ENCODE measurements at regions of chr19 and their contacts with region 1.

Region 1: DNA sequence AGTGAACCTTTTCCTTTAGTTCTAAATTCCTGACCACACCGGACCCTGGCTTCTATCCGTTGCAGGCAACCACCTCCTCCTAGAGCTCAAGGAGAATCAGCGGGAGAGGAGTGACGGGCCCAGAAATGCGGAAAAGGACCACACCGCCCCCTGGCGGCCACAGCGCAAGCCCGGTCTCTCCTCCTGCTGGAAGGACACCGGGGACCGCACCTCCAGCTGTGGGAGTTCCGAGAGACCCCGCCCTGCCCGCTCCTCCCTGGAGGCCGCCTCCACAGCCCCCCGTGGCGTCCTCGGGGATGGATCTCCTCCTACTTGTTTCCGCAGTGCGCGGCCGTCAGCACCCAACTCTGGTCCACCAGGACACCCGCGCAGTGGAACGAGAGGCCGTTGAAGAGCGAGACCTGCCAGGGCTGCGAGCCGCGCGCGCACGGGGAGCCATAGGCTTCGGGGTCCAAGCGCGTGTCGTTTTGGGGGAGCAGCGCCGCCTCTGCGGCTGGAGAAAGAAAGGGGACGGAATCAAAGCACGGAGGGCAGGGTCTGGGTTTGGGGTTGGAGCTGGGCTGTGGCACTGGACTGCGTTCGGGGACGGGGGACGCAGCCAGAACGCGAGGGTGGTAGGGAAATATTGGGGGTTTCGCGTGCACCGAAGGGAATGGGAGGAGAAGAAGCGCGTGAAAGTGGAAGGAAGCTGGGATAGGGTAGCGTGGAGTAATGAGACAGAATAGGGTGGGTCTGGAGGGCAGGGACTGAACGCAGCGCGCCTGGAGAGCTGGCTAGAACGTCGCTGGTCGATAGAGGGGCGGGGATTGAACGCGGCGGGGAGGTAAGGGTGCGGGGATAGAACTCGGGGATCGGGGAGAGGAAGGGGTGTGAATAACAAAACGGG is 2.5 kb downstream of the KLK10 start:
- H3K4me3 Mint-ChIP-seq: peak overlapping the region; percentile 70
- H3K27ac Mint-ChIP-seq: no peak overlapping the region
- H3K4me1 Mint-ChIP-seq: peaks cover 32% of the 10 kb centered on the region
- H3K27me3 Mint-ChIP-seq: peaks cover 70% of the 10 kb centered on the region

Region 2: GRCh38 chr19:50925734-50926133 is 91.3 kb before region 1 on chr19:
- intact Hi-C with region 1: loop called (anchors 5 kb)
- H3K4me3 Mint-ChIP-seq: no peak overlapping the region
- H3K27ac Mint-ChIP-seq: no peak overlapping the region
- H3K4me1 Mint-ChIP-seq: peaks cover 10% of the 10 kb centered on the region
- H3K27me3 Mint-ChIP-seq: peaks cover 33% of the 10 kb centered on the region

Region 3: DNA sequence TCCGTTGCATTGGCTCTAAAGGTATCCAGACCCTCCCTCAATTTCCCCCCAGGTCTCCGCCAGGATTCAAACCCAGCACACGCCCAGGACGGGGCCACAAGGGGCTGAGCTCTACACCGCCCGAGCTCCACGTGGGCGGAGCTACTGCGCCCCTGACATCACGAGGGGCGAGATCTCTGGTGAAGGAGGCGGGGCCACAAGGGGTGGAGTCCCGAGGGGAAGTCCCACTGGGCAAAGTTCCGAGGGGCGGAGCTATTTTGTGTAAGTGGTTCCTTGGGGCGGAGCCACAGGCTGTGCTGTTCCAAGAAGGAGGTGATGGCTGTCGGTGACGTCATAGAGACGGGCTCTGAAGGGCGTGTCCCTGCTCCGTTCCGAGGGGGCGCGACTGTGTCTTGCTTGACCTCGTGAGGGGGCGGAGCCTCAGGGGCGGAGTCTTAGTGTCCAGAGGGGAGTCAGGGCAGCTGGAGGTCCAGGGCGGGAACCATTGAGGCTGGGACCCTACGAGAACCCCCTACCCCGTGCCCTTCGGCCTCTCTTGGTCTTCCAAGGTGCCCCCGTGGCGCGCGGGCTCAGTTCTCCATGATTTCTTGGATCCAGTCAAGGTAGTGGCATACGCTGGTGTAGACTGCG is 14.4 kb before region 1 on chr19:
- intact Hi-C with region 1: no loop called
- H3K4me3 Mint-ChIP-seq: no peak overlapping the region
- H3K27ac Mint-ChIP-seq: no peak overlapping the region
- H3K4me1 Mint-ChIP-seq: no peaks in the 10 kb centered on the region
- H3K27me3 Mint-ChIP-seq: peaks cover 46% of the 10 kb centered on the region

Region 4: DNA sequence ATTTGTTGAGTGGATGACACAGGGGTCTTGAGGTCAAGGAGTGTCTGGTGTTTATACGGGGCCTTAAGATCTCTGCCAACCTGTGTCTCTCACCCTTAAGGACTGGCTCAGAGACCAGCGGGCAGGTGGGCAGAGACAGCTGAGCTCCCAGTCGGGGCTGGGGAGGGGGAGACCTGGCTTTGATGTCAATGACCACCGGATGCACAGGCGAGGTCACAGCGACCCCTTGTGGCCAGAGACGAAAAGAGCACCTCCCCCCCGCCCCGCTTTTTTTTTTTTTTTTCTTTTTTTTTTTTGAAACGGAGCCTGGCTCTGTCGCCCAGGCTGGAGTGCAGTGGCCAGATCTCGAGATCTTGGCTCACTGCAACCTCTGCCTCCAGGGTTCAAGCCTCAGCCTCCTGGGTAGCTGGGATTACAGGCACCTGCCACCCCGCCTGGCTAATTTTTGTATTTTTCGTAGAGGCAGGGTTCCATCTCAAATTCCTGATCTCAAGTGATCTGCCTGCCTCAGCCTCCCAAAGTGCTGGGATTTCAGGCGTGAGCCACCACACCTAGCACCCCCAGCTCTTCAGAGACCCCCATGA is 77.7 kb after region 1 on chr19:
- intact Hi-C with region 1: loop called (anchors 2 kb)
- H3K4me3 Mint-ChIP-seq: no peak overlapping the region
- H3K27ac Mint-ChIP-seq: no peak overlapping the region
- H3K4me1 Mint-ChIP-seq: peaks cover 29% of the 10 kb centered on the region
- H3K27me3 Mint-ChIP-seq: peaks cover 6% of the 10 kb centered on the region

Region 5: DNA sequence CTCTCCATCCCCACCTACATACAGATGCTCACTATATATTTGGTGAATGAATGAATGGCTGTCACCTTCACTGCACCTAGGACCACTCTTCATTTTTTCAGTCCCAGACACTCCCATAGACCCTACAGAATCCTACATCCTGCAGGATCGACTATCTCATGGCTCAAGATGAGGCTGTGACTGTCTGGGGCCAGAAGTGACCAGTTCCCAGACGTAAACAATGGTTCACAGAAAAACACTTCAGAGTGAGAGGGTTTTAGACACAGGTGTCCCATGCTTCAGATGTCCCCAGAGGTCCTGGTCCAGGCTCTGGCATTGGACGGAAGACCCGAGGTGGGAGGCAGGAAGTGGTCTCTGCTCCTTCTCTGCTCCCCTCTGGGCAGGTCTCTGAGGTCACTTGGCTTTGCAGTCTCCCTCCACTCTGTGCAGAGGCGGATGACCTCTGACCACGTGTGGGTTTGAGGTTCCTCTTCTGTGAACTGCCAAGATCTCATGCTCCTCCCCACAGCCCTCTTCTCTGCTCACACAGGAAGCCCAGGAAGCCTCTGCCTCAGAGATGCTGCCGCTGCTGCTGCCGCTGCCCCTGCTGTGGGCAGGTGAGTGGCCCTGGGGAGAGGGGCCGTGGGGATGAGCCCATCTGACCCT is 149.9 kb after region 1 on chr19:
- intact Hi-C with region 1: loop called (anchors 5 kb)
- H3K4me3 Mint-ChIP-seq: peak overlapping the region; percentile 33
- H3K27ac Mint-ChIP-seq: peak overlapping the region; percentile 47
- H3K4me1 Mint-ChIP-seq: peaks cover 44% of the 10 kb centered on the region
- H3K27me3 Mint-ChIP-seq: peaks cover 3% of the 10 kb centered on the region